Aorta (tissue), 5 donors: ENCODE measurements at regions of chr1 and their contacts with region 1.

Region 1: DNA sequence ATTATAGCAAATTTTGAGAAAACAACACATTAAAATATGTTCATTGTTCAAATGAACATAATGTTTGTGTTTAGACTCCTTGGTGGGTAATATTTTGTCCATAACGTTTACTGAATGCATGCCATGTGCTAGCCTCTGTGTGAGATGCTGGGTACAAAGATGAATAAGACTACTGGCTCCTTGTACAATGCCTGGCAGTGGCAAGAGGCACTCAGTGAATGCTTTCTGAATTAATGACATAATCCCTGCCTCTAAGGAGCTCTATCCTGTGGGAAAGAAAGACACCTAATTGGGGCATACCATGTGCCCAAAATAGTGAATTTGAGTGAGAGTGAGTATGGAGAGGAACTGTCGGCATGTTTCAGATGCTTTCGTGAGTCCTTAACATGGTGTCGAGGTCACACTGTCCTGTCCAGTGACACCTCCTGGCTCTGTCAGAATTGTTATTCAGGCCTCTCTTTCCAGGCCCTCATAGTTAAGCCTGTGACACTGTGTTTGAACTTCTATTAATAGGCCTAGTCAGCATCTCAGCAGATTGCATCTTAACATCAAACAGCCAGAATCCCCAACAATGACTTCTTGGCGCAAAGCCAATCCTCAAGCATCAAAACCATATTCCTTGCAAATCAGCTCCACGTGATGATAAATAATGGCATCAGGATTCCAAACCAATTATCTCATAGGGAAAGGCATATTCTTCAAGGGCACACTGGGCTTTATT is 32.8 kb upstream of the S1PR1 start:
- DNase-seq: no peak
- ATAC-seq: no peak
- H3K4me3 ChIP-seq: no peak overlapping the region
- H3K27ac ChIP-seq: no peak overlapping the region
- H3K4me1 ChIP-seq: no peaks in the 10 kb centered on the region
- H3K27me3 ChIP-seq: no peaks in the 10 kb centered on the region

Region 2: GRCh38 chr1:99599678-99600175 is 1604.3 kb before region 1 on chr1:
- intact Hi-C with region 1: loop called in 1 of 2 experiments (anchors 5 kb)
- DNase-seq: peak in 1 of 2 donors; percentile 68
- ATAC-seq: peak; percentile 57
- H3K4me3 ChIP-seq: no peak overlapping the region
- H3K27ac ChIP-seq: no peak overlapping the region
- H3K4me1 ChIP-seq: no peaks in the 10 kb centered on the region
- H3K27me3 ChIP-seq: no peaks in the 10 kb centered on the region

Region 3: GRCh38 chr1:101257500-101258325 is 53.7 kb after region 1 on chr1:
- intact Hi-C with region 1: no loop called
- DNase-seq: no peak
- ATAC-seq: peak; percentile 50
- H3K4me3 ChIP-seq: no peak overlapping the region
- H3K27ac ChIP-seq: no peak overlapping the region
- H3K4me1 ChIP-seq: no peaks in the 10 kb centered on the region
- H3K27me3 ChIP-seq: no peaks in the 10 kb centered on the region